ENCODE measurements at regions of chr2 and their contacts with region 1.

Region 1: DNA sequence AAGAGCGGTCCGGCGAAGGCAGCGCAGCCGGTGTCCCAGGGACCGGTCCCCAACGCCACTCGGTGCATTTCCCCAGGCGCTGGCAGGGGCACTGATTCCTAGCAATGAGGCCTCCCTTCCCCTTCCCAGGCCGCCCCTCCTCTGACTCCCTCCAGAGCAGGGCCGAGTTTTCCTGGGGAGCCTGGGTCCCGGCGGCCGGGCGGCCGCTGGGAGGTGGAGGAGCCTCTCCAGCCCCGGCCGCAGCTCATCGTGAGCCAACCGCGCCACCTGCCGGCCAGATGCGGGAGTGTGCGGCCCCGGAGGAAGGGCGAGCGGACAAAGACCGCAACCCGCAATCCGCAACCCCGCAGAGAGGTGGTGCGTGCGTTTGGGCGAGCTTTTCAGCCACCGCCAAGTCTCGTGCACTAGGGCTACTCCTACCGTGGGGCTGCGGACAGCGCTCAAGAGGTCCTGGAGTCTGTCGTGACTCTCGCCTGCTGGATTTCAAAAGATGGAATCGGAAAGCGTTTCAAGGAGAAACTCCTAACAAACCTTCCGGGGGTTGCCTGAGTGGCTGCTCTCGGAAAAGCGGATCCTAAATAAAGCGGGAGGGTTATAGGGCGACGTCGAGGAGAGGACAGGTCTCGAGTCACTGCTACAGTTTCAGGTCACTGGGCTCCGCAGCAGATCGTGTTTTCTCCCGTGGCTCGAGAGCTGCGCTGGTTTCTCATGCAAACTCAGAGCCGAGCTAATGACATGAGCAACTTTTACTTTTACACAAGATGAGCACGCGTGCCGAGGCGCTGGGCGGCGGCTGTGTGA is 1.5 kb upstream of the EPHA4 start:
- DNase-seq: peak; percentile 69
- H3K4me3 ChIP-seq: peak overlapping the region; percentile 67 to 78 (median 71)
- H3K27ac ChIP-seq: no peak overlapping the region
- H3K4me1 ChIP-seq: peaks cover 19% of the 10 kb centered on the region
- H3K27me3 ChIP-seq: peaks cover 2% of the 10 kb centered on the region
- CTCF ChIP-seq: peak; percentile 65 to 95

Region 2: DNA sequence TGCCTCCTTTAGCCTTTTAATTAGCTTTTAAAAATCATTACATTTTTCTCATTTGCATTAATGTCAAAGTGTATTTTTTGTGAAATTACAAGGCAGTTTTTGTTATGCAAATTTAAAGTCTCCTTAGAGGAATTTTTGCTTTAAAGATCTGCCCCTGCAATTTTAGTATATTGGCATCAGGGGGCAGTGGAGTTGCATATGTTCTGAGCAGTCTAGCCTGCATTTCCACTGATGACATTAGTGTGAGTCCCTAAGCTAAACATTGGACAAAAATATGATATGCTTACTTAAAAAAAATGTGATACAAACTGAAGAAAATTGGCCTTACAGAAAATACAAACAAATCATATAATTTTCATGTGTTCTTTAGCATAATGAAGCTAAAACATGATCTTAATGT is 1519.7 kb before region 1 on chr2:
- CTCF ChIA-PET with region 1: no interaction called
- dilution Hi-C with region 1: no loop called
- in situ Hi-C with region 1: no loop called
- intact Hi-C with region 1: loop called (anchors 1 kb)
- DNase-seq: no peak
- H3K4me3 ChIP-seq: no peak overlapping the region
- H3K27ac ChIP-seq: no peak overlapping the region
- H3K4me1 ChIP-seq: no peaks in the 10 kb centered on the region
- H3K27me3 ChIP-seq: no peaks in the 10 kb centered on the region
- CTCF ChIP-seq: peak; percentile 37 to 51

Region 3: GRCh38 chr2:220687231-220687843 is 886.3 kb before region 1 on chr2:
- CTCF ChIA-PET with region 1: no interaction called
- dilution Hi-C with region 1: no loop called
- in situ Hi-C with region 1: loop called (anchors 5 to 10 kb)
- intact Hi-C with region 1: loop called (anchors 1 kb)
- DNase-seq: peak; percentile 54
- H3K4me3 ChIP-seq: no peak overlapping the region
- H3K27ac ChIP-seq: no peak overlapping the region
- H3K4me1 ChIP-seq: peaks cover 3% of the 10 kb centered on the region
- H3K27me3 ChIP-seq: no peaks in the 10 kb centered on the region
- CTCF ChIP-seq: peak; percentile 81 to 90

Region 4: GRCh38 chr2:221097568-221097915 is 476.1 kb before region 1 on chr2:
- CTCF ChIA-PET with region 1: no interaction called
- dilution Hi-C with region 1: no loop called
- in situ Hi-C with region 1: no loop called
- intact Hi-C with region 1: loop called (anchors 10 kb)
- DNase-seq: peak; percentile 74
- H3K4me3 ChIP-seq: no peak overlapping the region
- H3K27ac ChIP-seq: no peak overlapping the region
- H3K4me1 ChIP-seq: peaks cover 20% of the 10 kb centered on the region
- H3K27me3 ChIP-seq: no peaks in the 10 kb centered on the region
- CTCF ChIP-seq: no peak

Region 5: GRCh38 chr2:221347471-221347870 is 226.2 kb before region 1 on chr2:
- CTCF ChIA-PET with region 1: no interaction called
- dilution Hi-C with region 1: no loop called
- in situ Hi-C with region 1: no loop called
- intact Hi-C with region 1: loop called (anchors 10 kb)
- DNase-seq: peak; percentile 51
- H3K4me3 ChIP-seq: no peak overlapping the region
- H3K27ac ChIP-seq: no peak overlapping the region
- H3K4me1 ChIP-seq: no peaks in the 10 kb centered on the region
- H3K27me3 ChIP-seq: no peaks in the 10 kb centered on the region
- CTCF ChIP-seq: no peak

Region 6: GRCh38 chr2:221485503-221485870 is 88.1 kb before region 1 on chr2:
- CTCF ChIA-PET with region 1: no interaction called
- dilution Hi-C with region 1: no loop called
- in situ Hi-C with region 1: no loop called
- intact Hi-C with region 1: no loop called
- DNase-seq: no peak
- H3K4me3 ChIP-seq: no peak overlapping the region
- H3K27ac ChIP-seq: no peak overlapping the region
- H3K4me1 ChIP-seq: no peaks in the 10 kb centered on the region
- H3K27me3 ChIP-seq: no peaks in the 10 kb centered on the region
- CTCF ChIP-seq: no peak

Region 7: GRCh38 chr2:221517696-221518151 is 55.9 kb before region 1 on chr2:
- CTCF ChIA-PET with region 1: no interaction called
- dilution Hi-C with region 1: no loop called
- in situ Hi-C with region 1: no loop called
- intact Hi-C with region 1: no loop called
- DNase-seq: no peak
- H3K4me3 ChIP-seq: no peak overlapping the region
- H3K27ac ChIP-seq: no peak overlapping the region
- H3K4me1 ChIP-seq: no peaks in the 10 kb centered on the region
- H3K27me3 ChIP-seq: no peaks in the 10 kb centered on the region
- CTCF ChIP-seq: no peak

Region 8: GRCh38 chr2:221529943-221530652 is 43.5 kb before region 1 on chr2:
- CTCF ChIA-PET with region 1: no interaction called
- dilution Hi-C with region 1: no loop called
- in situ Hi-C with region 1: no loop called
- intact Hi-C with region 1: loop called (anchors 5 kb)
- DNase-seq: peak; percentile 92
- H3K4me3 ChIP-seq: no peak overlapping the region
- H3K27ac ChIP-seq: no peak overlapping the region
- H3K4me1 ChIP-seq: peaks cover 28% of the 10 kb centered on the region
- H3K27me3 ChIP-seq: no peaks in the 10 kb centered on the region
- CTCF ChIP-seq: no peak

Measured in mammary epithelial cell (primary cell).